ENCODE measurements at regions of chr6 and their contacts with region 1.

Region 1: DNA sequence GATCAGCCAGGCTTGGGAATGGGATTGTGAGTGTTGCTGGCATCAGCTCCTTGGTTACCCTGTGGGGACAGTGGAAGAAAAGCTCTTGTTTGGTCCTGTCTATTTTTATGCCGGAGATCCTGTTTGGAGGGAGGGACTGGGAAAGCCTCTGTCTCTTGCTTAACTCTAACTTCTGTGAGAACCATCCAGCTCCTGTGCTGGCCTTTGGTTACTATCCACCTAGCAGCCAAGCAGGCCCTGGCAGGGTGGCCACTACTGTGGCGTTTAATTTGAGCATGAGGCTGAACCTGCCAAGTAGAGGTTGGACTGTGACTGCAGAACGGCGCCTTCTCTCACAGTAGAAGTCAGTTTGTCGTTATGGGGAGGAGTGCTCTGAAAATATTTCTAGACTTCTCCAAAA is 193.3 kb downstream of the UTRN start:
- DNase-seq: peak in 3 of 4 donors; percentile 16 to 51 (median 17)
- ATAC-seq: peak; percentile 39
- H3K4me3 ChIP-seq: no peak overlapping the region
- H3K27ac ChIP-seq: peak overlapping the region in 2 of 4 donors; percentile 29 to 49
- H3K4me1 ChIP-seq: peaks cover 13% of the 10 kb centered on the region
- H3K27me3 ChIP-seq: no peaks in the 10 kb centered on the region
- CTCF ChIP-seq: no peak
- POLR2A ChIP-seq: no peak

Region 2: DNA sequence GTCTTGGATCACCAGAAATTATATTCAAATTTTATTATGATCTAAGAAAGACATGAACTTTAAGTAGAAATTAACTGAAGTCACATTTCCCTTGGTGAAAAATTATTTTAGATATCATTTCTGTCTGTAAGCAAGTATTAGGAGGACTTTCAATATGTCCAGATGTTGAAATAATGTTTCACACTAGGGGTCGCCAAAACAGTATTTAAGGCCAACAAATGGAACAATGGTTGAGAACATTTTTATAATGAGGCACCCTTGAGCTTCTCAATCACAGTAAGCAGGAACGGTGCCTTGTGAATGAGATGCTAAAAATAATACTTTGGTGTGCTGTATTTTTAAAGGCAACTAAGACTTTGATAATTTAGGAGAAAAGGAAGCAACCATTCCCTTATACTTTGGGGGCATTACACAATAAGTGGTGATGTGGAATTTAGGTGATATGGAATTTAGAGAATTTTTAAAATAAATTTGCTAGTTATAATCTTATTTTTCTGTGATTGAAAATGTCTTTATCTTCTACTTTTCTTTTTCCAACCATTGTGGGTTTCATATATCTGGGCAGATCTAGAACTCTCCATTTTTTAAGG is 373.5 kb before region 1 on chr6:
- intact Hi-C with region 1: loop called (anchors 5 kb)
- DNase-seq: peak in 3 of 4 donors; percentile 14 to 64 (median 27)
- ATAC-seq: peak; percentile 80
- H3K4me3 ChIP-seq: no peak overlapping the region
- H3K27ac ChIP-seq: no peak overlapping the region
- H3K4me1 ChIP-seq: no peaks in the 10 kb centered on the region
- H3K27me3 ChIP-seq: no peaks in the 10 kb centered on the region
- CTCF ChIP-seq: peak; percentile 25 to 81 (median 75)
- POLR2A ChIP-seq: no peak

Measured in body of pancreas (tissue), 4 donors.